ENCODE measurements at regions of chr12 and their contacts with region 1.

Region 1: DNA sequence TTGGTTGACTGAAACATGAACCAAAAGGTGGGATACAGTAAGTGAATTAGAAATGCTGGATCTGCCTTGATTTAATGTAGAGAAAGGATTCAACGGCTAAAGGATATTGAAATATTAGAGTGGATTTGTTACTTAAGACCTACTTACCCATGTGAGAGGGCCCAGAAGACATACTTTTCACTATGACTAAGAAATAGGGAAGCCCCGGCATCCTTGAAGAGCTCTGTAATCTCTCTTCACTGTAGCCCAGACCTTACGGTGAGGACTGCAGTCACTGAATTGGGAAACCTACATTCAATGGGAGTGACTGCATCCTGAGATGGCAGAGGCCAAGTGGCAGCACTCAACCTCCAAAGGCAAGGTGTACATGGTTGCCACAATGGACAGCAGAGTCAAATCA is 52.5 kb downstream of the KANSL2 start:
- DNase-seq: no peak
- H3K4me3 ChIP-seq: no peak overlapping the region
- H3K27ac ChIP-seq: no peak overlapping the region
- H3K4me1 ChIP-seq: no peaks in the 10 kb centered on the region
- H3K27me3 ChIP-seq: peaks cover 0 to 24% (median 0%) of the 10 kb centered on the region in 4 donors
- CTCF ChIP-seq: no peak
- POLR2A ChIP-seq: no peak

Region 2: GRCh38 chr12:48508991-48509390 is 120.5 kb before region 1 on chr12:
- intact Hi-C with region 1: no loop called
- DNase-seq: no peak
- H3K4me3 ChIP-seq: no peak overlapping the region
- H3K27ac ChIP-seq: no peak overlapping the region
- H3K4me1 ChIP-seq: peaks cover 0 to 8% (median 0%) of the 10 kb centered on the region in 3 donors
- H3K27me3 ChIP-seq: no peaks in the 10 kb centered on the region
- CTCF ChIP-seq: no peak
- POLR2A ChIP-seq: no peak

Region 3: DNA sequence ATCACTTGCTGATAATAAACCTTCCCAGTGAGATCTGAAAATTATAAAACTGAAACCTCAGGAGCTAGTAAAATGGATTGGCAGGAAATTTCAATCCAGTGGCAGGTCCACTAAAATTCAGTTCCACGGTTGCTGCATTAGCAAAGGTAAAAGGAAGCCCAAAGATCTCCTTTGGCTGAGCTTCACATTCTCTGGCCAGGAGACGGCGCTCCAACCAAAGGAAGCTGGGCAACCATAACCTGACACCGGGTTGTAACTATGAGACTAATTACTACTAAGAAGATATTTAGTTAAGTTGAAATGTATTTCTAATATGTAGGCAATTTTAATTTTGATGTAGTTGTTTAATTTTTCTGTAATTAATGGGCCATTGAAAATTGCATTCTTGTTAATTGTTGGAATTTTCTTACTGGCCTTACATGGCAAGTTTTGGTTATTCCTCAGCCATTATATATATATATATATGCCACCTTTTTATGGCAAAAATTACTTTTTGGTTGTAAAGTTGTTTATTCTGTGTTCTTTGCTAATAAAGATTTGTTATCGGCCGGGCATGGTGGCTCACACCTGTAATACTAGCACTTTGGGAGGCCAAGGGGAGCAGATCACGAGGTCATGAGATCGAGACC is 87.1 kb before region 1 on chr12:
- intact Hi-C with region 1: loop called (anchors 10 kb)
- DNase-seq: no peak
- H3K4me3 ChIP-seq: no peak overlapping the region
- H3K27ac ChIP-seq: no peak overlapping the region
- H3K4me1 ChIP-seq: no peaks in the 10 kb centered on the region
- H3K27me3 ChIP-seq: peaks cover 0 to 3% (median 0%) of the 10 kb centered on the region in 4 donors
- CTCF ChIP-seq: peak in 5 of 6 experiments; percentile 18 to 80 (median 62)
- POLR2A ChIP-seq: no peak

Region 4: GRCh38 chr12:48580831-48581230 is 48.7 kb before region 1 on chr12:
- intact Hi-C with region 1: no loop called
- DNase-seq: no peak
- H3K4me3 ChIP-seq: no peak overlapping the region
- H3K27ac ChIP-seq: no peak overlapping the region
- H3K4me1 ChIP-seq: no peaks in the 10 kb centered on the region
- H3K27me3 ChIP-seq: peaks cover 0 to 4% (median 0%) of the 10 kb centered on the region in 4 donors
- CTCF ChIP-seq: no peak
- POLR2A ChIP-seq: no peak